Right ventricle myocardium inferior (tissue), 1 donor: ENCODE measurements at regions of chr5 and their contacts with region 1.

Region 1: GRCh38 chr5:130141659-130142320 is 237.5 kb downstream of the CHSY3 start:
- DNase-seq: no peak
- ATAC-seq: no peak

Region 2: GRCh38 chr5:129904102-129904666 is 237.6 kb before region 1 on chr5 and contains the start of gene CHSY3:
- intact Hi-C with region 1: loop called (anchors 10 kb)
- DNase-seq: peak; percentile 90
- ATAC-seq: peak; percentile 96
- total RNA-seq, gene CHSY3: 0.57 TPM